ENCODE measurements at regions of chr3 and their contacts with region 1.

Region 1: GRCh38 chr3:133573054-133573628 is 345 bp upstream of the CDV3 start:
- DNase-seq: peak; percentile 100
- ATAC-seq: peak; percentile 81
- H3K4me3 Mint-ChIP-seq: peak overlapping the region; percentile 87
- H3K27ac Mint-ChIP-seq: peak overlapping the region; percentile 100
- H3K4me1 Mint-ChIP-seq: peaks cover 47% of the 10 kb centered on the region
- H3K27me3 Mint-ChIP-seq: no peaks in the 10 kb centered on the region

Region 2: GRCh38 chr3:132416807-132417694 is 1156.1 kb before region 1 on chr3 and contains the start of gene DNAJC13:
- CTCF ChIA-PET with region 1: no interaction called
- POLR2A ChIA-PET with region 1: no interaction called
- intact Hi-C with region 1: loop called in 1 of 2 experiments (anchors 1 kb)
- DNase-seq: peak; percentile 95
- ATAC-seq: peak; percentile 94
- H3K4me3 Mint-ChIP-seq: peak within 1 kb of the TSS; percentile 87
- H3K27ac Mint-ChIP-seq: peak within 1 kb of the TSS; percentile 94
- H3K4me1 Mint-ChIP-seq: peaks cover 37% of the 10 kb centered on the region
- H3K27me3 Mint-ChIP-seq: no peaks in the 10 kb centered on the region
- total RNA-seq, gene DNAJC13: 29.9 to 33.5 TPM

Region 3: GRCh38 chr3:133441867-133442270 is 131.3 kb before region 1 on chr3:
- CTCF ChIA-PET with region 1: interaction called, 3 read pairs
- POLR2A ChIA-PET with region 1: interaction called, 3 read pairs
- intact Hi-C with region 1: loop called in 1 of 2 experiments (anchors 1 kb)
- DNase-seq: peak; percentile 49
- ATAC-seq: peak; percentile 84
- H3K4me3 Mint-ChIP-seq: peak overlapping the region; percentile 45
- H3K27ac Mint-ChIP-seq: peak overlapping the region; percentile 81
- H3K4me1 Mint-ChIP-seq: peaks cover 40% of the 10 kb centered on the region
- H3K27me3 Mint-ChIP-seq: no peaks in the 10 kb centered on the region

Region 4: GRCh38 chr3:133487920-133488540 is 85.1 kb before region 1 on chr3:
- CTCF ChIA-PET with region 1: interaction called, 31 read pairs
- POLR2A ChIA-PET with region 1: interaction called, 21 read pairs
- intact Hi-C with region 1: loop called (anchors 1 to 2 kb)
- DNase-seq: peak; percentile 69
- ATAC-seq: no peak
- H3K4me3 Mint-ChIP-seq: no peak overlapping the region
- H3K27ac Mint-ChIP-seq: no peak overlapping the region
- H3K4me1 Mint-ChIP-seq: peaks cover 49% of the 10 kb centered on the region
- H3K27me3 Mint-ChIP-seq: no peaks in the 10 kb centered on the region

Region 5: GRCh38 chr3:133595341-133595740 is 22.2 kb after region 1 on chr3:
- CTCF ChIA-PET with region 1: interaction called, 8 read pairs
- POLR2A ChIA-PET with region 1: interaction called, 24 read pairs
- intact Hi-C with region 1: loop called in 1 of 2 experiments (anchors 2 kb)
- DNase-seq: peak; percentile 58
- ATAC-seq: peak; percentile 95
- H3K4me3 Mint-ChIP-seq: no peak overlapping the region
- H3K27ac Mint-ChIP-seq: peak overlapping the region; percentile 24
- H3K4me1 Mint-ChIP-seq: peaks cover 32% of the 10 kb centered on the region
- H3K27me3 Mint-ChIP-seq: no peaks in the 10 kb centered on the region

Region 6: DNA sequence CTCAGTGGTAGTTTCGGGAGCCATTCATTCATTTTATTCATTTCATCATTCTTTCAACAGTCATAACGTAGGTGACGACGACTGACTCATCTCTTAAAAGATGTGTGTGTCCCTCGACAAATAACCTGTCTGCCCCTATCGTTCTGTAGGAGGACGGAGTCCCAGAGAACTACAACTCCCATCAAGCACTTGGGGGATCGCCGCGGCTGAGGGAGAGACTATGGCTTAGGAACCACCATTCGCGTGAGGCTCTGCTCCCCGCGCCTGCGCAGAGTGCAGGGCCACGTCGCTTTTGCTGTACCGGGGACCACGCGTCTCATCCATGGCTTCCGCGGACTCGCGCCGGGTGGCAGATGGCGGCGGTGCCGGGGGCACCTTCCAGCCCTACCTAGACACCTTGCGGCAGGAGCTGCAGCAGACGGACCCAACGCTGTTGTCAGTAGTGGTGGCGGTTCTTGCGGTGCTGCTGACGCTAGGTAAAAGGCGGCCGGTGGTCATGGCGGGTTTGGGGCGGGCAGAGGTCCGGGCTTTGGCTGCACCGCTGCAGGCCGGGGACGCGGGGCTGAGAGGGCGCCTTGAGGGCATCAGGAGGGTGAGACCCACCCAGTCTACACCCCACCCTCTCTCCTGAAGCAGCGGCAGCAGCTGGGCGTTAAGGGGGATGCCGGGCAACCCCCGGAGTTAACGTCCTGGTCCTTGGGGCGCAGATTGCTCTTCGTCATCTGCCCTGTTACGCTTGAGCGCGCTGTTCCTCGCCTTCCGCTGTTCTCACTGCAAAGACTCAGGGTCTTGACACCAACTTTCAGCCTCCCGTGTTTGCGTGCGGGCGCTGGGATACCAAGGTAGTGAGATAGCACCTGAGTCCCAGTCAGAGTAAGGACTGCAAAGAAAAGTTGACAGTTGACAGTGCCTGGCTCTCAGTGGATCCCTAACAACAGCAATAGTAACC is 232.7 kb after region 1 on chr3 and contains the start of gene SRPRB:
- CTCF ChIA-PET with region 1: no interaction called
- POLR2A ChIA-PET with region 1: interaction called, 3 read pairs
- intact Hi-C with region 1: loop called (anchors 1 to 2 kb)
- DNase-seq: peak; percentile 98
- ATAC-seq: peak; percentile 99
- H3K4me3 Mint-ChIP-seq: peak within 1 kb of the TSS; percentile 93
- H3K27ac Mint-ChIP-seq: peak within 1 kb of the TSS; percentile 98
- H3K4me1 Mint-ChIP-seq: peaks cover 39% of the 10 kb centered on the region
- H3K27me3 Mint-ChIP-seq: peaks cover 6% of the 10 kb centered on the region
- total RNA-seq, gene SRPRB: 42.7 to 66.2 TPM